H1 (cell line): ENCODE measurements at regions of chr9 and their contacts with region 1.

Region 1: DNA sequence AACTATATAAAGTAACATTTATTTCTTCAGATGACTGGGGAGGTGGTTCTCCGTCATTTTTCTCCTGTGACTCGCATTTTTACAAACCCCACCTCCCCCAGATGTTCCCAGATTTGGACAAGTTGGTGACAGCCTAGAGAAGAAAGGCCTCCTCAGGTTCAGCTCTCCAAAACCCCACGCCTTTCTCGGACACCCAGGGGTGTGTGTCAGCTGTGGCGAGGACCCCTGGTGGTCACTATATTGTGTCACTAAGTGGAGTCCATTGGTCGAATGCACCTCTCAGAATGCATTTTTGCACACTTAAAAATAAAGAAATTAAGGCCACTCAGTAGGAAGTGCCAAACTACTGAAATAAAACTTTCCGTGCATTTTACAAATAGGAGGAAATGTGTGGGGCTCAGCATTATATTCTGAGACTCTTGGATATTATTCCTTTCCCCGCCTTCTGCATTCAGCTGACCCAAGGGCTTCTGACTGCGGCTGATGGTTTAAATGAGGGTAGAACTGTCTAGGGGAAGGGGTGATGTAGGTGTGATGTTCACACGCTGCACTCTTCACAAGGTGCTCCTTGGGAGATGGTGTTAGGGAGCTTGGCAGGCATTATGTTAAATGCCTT is 47.6 kb downstream of the ACO1 start:
- DNase-seq: peak in 1 of 2 experiments; percentile 52
- H3K4me3 ChIP-seq: no peak overlapping the region
- H3K27ac ChIP-seq: no peak overlapping the region
- H3K4me1 ChIP-seq: no peaks in the 10 kb centered on the region
- H3K27me3 ChIP-seq: peaks cover 0 to 1% (median 0%) of the 10 kb centered on the region in 4 experiments; a peak in 1 of 7 replicates
- CTCF ChIP-seq: peak; percentile 39 to 62 (median 52)
- EP300 ChIP-seq: no peak
- POLR2A ChIP-seq: no peak
- RAD21 ChIP-seq: peak; percentile 47 to 49

Region 2: GRCh38 chr9:32395490-32396216 is 36.4 kb before region 1 on chr9:
- CTCF ChIA-PET with region 1: interaction called, 12 read pairs
- POLR2A ChIA-PET with region 1: no interaction called
- DNase-seq: no peak
- H3K4me3 ChIP-seq: no peak overlapping the region
- H3K27ac ChIP-seq: no peak overlapping the region
- H3K4me1 ChIP-seq: peaks cover 0 to 7% (median 3%) of the 10 kb centered on the region in 4 experiments; a peak in 4 of 7 replicates
- H3K27me3 ChIP-seq: no peaks in the 10 kb centered on the region
- CTCF ChIP-seq: peak in 2 of 3 experiments; percentile 22 to 46; a peak in 2 of 4 replicates
- EP300 ChIP-seq: no peak
- POLR2A ChIP-seq: no peak
- RAD21 ChIP-seq: peak in 1 of 2 experiments; percentile 13; a peak in 1 of 4 replicates

Region 3: GRCh38 chr9:32413424-32413823 is 18.6 kb before region 1 on chr9:
- CTCF ChIA-PET with region 1: interaction called, 14 read pairs
- POLR2A ChIA-PET with region 1: no interaction called
- DNase-seq: no peak
- H3K4me3 ChIP-seq: no peak overlapping the region
- H3K27ac ChIP-seq: no peak overlapping the region
- H3K4me1 ChIP-seq: no peaks in the 10 kb centered on the region
- H3K27me3 ChIP-seq: no peaks in the 10 kb centered on the region
- CTCF ChIP-seq: no peak
- EP300 ChIP-seq: no peak
- POLR2A ChIP-seq: no peak
- RAD21 ChIP-seq: no peak

Region 4: GRCh38 chr9:32419921-32420320 is 12.1 kb before region 1 on chr9:
- CTCF ChIA-PET with region 1: interaction called, 14 read pairs
- POLR2A ChIA-PET with region 1: interaction called, 3 read pairs
- DNase-seq: no peak
- H3K4me3 ChIP-seq: no peak overlapping the region
- H3K27ac ChIP-seq: no peak overlapping the region
- H3K4me1 ChIP-seq: no peaks in the 10 kb centered on the region
- H3K27me3 ChIP-seq: no peaks in the 10 kb centered on the region
- CTCF ChIP-seq: no peak
- EP300 ChIP-seq: no peak
- POLR2A ChIP-seq: no peak
- RAD21 ChIP-seq: no peak